ENCODE measurements at regions of chr5 and their contacts with region 1.

Region 1: GRCh38 chr5:150853561-150853960 is 7.2 kb downstream of the IRGM start:
- DNase-seq: no peak
- ATAC-seq: no peak

Region 2: DNA sequence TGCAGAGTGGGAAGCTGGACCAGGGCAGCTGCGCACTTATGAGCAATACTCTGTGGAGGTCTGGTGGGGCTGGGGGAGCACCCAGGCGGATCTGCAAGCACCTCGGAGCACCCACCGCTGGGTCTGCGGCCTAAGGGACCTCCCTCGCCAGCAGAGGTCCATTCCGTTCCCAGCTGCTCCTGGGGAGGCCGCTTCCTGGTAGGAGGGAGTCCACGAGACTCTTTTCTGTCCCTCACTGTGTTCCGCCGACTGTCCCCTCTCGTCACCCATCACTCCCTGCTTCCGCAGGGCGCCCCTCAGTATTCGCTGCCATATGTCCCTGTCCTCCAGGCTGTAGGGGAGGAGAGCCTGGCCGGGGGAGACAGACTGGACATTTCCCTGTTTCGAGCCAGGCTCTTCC is 300.2 kb before region 1 on chr5:
- intact Hi-C with region 1: loop called (anchors 2 kb)
- DNase-seq: peak; percentile 31
- ATAC-seq: no peak

Region 3: DNA sequence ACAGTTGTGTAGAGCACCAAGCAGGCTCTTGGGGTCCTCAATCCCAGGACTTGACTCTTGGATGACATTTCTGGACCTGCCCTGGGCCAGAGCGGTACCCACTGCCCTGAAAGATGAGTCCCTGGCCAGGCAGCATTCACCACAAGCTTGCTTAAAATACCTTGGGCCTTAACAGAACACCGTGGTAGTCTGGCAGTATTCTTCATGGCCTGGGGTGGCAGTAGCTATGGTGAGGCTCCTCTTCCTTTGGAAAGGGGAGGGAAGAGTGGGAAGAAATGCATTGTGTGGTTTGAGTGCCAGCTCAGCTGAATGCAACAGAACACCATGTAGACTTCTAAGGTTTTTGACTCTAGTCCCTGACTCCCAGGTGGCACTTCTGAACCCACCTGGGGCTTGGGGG is 36.6 kb before region 1 on chr5:
- intact Hi-C with region 1: no loop called
- DNase-seq: no peak
- ATAC-seq: no peak

Measured in Right ventricle myocardium inferior (tissue), 1 donor.